Esophagus muscularis mucosa (tissue), 4 donors: ENCODE measurements at regions of chrX and their contacts with region 1.

Region 1: DNA sequence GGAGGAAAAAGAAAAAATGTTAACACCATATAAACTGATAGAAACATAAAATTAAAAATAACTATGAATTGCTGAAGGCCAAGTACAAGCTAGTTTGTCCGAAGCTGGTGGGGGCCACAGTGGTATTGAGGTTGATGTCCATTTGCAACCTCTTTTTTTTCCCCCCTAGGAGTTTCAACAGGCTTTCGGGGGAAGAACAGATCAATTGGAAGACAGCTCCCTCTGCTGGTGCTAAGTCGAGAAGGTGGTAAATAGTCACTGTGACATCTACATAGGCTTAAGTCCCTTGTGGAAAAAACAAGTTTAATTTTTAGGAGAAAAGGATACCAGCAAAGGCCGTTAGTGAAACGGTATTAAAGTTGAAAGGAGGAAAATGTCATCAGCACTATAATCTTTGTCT is 115.7 kb upstream of the ZXDA start:
- DNase-seq: no peak
- H3K4me3 ChIP-seq: no peak overlapping the region
- H3K27ac ChIP-seq: no peak overlapping the region
- H3K4me1 ChIP-seq: no peaks in the 10 kb centered on the region
- H3K27me3 ChIP-seq: no peaks in the 10 kb centered on the region
- CTCF ChIP-seq: peak; percentile 32 to 48 (median 43)
- EP300 ChIP-seq: no peak
- POLR2A ChIP-seq: no peak

Region 2: DNA sequence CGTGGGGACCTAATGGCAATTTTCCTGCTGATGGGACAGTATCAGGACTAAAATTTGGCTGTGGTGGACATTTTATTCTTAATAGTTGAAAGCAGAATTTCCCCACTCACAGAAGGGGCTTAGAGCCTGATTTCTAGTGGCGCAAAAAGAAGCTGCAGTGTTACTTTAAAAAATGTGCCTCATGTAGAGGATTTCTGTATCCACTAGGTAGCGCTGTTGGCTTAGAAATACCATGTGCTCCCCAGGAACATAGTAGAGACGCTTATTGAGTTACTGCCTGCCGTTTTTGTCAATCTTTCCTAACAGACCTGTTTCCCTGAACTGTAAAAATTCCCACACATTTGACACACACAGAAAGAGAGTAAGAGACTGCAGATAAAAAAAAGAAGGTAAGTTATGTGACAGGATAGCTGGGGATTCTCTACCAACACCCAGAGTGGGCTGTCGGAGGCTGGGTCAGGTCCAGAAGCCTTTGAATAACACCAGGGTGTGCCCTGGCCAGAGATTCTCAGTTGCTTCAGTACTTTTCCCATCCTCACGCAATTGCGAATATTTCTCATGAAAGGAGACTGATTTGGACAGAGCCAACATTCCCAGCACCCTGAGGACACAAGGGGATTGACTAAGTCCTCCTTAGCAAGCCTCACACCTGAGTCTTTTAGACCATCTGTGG is 204.1 kb before region 1 on chrX:
- intact Hi-C with region 1: loop called (anchors 10 kb)
- DNase-seq: no peak
- H3K4me3 ChIP-seq: peak overlapping the region; percentile 24 to 39 (median 28)
- H3K27ac ChIP-seq: no peak overlapping the region
- H3K4me1 ChIP-seq: peaks cover 0 to 4% (median 0%) of the 10 kb centered on the region in 4 donors
- H3K27me3 ChIP-seq: no peaks in the 10 kb centered on the region
- CTCF ChIP-seq: peak; percentile 63 to 68 (median 64)
- EP300 ChIP-seq: no peak
- POLR2A ChIP-seq: no peak